K562 (cell line): ENCODE measurements at regions of chr1 and their contacts with region 1.

Region 1: DNA sequence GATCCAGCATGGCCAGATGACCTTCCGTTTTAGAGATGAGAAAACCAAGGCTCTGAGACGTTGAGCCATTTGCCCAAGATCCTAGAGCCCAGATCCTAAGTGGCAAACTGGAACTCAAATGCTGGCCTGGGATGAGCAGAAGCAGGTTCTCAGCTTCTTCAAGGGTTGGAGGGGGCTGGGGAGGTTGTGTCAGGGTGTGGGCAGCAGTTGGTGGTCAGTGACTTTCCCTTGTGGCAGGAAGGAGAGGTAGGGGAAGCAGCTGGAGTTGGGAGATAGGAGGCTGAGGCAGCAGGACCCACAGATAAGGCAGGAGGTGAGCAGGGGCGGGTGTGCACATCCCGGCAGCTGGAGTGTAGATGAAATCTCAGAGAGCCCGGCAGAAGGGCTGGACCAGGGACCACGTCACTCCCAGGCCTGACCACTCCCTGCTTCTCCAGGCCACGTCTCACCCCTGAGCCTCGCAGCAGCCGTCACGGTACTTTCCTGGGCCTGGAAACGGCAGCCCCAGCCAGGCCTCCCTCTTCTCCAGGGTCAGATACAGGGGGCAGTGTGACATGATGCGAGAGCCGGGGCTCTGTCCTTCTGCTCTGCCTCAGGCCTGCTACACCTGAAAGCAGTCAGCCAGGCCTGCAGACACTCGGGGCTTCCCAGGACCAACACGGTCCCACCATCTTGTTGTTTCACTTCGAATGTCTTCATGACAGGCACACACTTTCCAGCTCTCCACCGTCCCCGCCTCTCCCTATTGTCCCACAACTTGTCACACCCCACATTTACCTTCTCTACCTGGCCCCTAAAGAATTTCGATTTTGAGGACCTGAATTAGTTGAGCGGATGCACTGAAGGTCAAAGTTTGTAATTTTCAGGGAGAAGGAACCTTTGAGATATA is 11.5 kb upstream of the LAPTM5 start:
- DNase-seq: peak; percentile 99 to 100 (median 100)
- ATAC-seq: peak; percentile 96
- H3K4me3 ChIP-seq: peak overlapping the region; percentile 4
- H3K27ac ChIP-seq: peak overlapping the region; percentile 98
- H3K4me1 ChIP-seq: peaks cover 56 to 68% of the 10 kb centered on the region in 2 experiments
- H3K27me3 ChIP-seq: no peaks in the 10 kb centered on the region; a peak in 1 of 5 replicates
- CTCF ChIP-seq: peak; percentile 41 to 52 (median 42); a peak in 3 of 6 replicates
- EP300 ChIP-seq: peak; percentile 100
- POLR2A ChIP-seq: peak; percentile 82
- RAD21 ChIP-seq: peak; percentile 39 to 47

Region 2: GRCh38 chr1:30732277-30732996 is 36.6 kb before region 1 on chr1:
- CTCF ChIA-PET with region 1: no interaction called
- POLR2A ChIA-PET with region 1: interaction called, 8 read pairs
- in situ Hi-C with region 1: no loop called
- intact Hi-C with region 1: loop called (anchors 2 kb)
- DNase-seq: peak in 1 of 4 experiments; percentile 38
- ATAC-seq: no peak
- H3K4me3 ChIP-seq: peak overlapping the region; percentile 26
- H3K27ac ChIP-seq: peak overlapping the region; percentile 50; the same call in 2 of the 3 replicates
- H3K4me1 ChIP-seq: peaks cover 54 to 66% of the 10 kb centered on the region in 2 experiments
- H3K27me3 ChIP-seq: no peaks in the 10 kb centered on the region
- CTCF ChIP-seq: no peak
- EP300 ChIP-seq: no peak
- POLR2A ChIP-seq: no peak
- RAD21 ChIP-seq: no peak

Region 3: DNA sequence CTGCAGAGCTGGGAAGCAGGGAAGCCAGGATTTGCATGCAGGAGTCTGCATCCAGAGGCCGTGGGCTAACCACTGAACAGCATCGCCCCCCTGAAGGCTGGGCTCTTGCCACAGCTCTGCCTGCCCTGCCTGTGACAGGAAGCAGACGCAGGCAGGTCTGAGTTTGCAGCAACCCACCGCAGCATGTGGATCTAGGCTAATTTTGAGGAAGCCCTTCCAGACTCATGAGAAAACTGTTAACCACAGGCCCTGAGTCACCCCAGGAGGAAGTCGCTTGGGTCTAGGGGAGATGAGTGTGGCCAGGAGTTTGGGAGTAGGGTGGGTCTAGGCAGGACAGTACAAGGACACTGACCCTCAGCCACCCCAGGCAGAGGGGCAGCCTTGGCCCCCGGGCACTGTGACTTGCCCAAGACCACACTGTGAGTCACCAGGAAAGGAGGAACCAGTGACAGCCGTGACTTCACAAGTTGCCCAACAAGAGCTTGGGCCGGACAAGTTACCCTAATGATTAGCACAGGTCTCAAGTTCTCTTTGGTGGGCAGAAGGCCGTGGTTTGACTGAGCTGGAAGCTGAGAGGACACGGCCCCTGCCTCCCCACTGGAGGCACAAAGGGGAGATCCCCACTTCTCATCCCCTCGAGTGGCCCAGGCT is 12.4 kb before region 1 on chr1:
- CTCF ChIA-PET with region 1: no interaction called
- POLR2A ChIA-PET with region 1: interaction called, 17 read pairs
- in situ Hi-C with region 1: no loop called
- intact Hi-C with region 1: no loop called
- DNase-seq: peak; percentile 48 to 82 (median 64)
- ATAC-seq: peak; percentile 63
- H3K4me3 ChIP-seq: 0 out of 2 replicates have a peak overlapping the region, but pooled peaks have one; percentile 0
- H3K27ac ChIP-seq: peak overlapping the region; percentile 81
- H3K4me1 ChIP-seq: peaks cover 59 to 65% of the 10 kb centered on the region in 2 experiments
- H3K27me3 ChIP-seq: no peaks in the 10 kb centered on the region
- CTCF ChIP-seq: no peak
- EP300 ChIP-seq: peak; percentile 58
- POLR2A ChIP-seq: no peak
- RAD21 ChIP-seq: 0 out of 4 replicates have a peak, but pooled peaks of 1 of the 2 experiments have one; percentile 26

Region 4: GRCh38 chr1:30809514-30810263 is 40.6 kb after region 1 on chr1:
- CTCF ChIA-PET with region 1: no interaction called
- POLR2A ChIA-PET with region 1: no interaction called
- in situ Hi-C with region 1: no loop called
- intact Hi-C with region 1: no loop called
- DNase-seq: peak; percentile 79 to 84 (median 80)
- ATAC-seq: peak; percentile 83
- H3K4me3 ChIP-seq: no peak overlapping the region
- H3K27ac ChIP-seq: peak overlapping the region; percentile 58
- H3K4me1 ChIP-seq: peaks cover 20 to 35% of the 10 kb centered on the region in 2 experiments
- H3K27me3 ChIP-seq: peaks cover 0 to 2% of the 10 kb centered on the region in 2 experiments; a peak in 1 of 5 replicates
- CTCF ChIP-seq: no peak
- EP300 ChIP-seq: no peak; the same call in 1 of the 2 replicates
- POLR2A ChIP-seq: no peak
- RAD21 ChIP-seq: no peak